Left ventricle myocardium inferior (tissue), 1 donor: ENCODE measurements at regions of chr17 and their contacts with region 1.

Region 1: GRCh38 chr17:29645515-29646051 is 22.9 kb upstream of the CORO6 start:
- DNase-seq: peak; percentile 80
- H3K4me3 ChIP-seq: no peak overlapping the region
- H3K27ac ChIP-seq: peak overlapping the region; percentile 93
- H3K4me1 ChIP-seq: peaks cover 73% of the 10 kb centered on the region
- H3K27me3 ChIP-seq: no peaks in the 10 kb centered on the region
- CTCF ChIP-seq: no peak

Region 2: GRCh38 chr17:29753845-29754439 is 108.4 kb after region 1 on chr17:
- intact Hi-C with region 1: loop called (anchors 10 kb)
- DNase-seq: no peak
- H3K4me3 ChIP-seq: no peak overlapping the region
- H3K27ac ChIP-seq: no peak overlapping the region
- H3K4me1 ChIP-seq: peaks cover 30% of the 10 kb centered on the region
- H3K27me3 ChIP-seq: no peaks in the 10 kb centered on the region
- CTCF ChIP-seq: no peak

Region 3: GRCh38 chr17:29929533-29930408 is 284.2 kb after region 1 on chr17 and contains the start of gene SSH2:
- intact Hi-C with region 1: no loop called
- DNase-seq: peak; percentile 89
- H3K4me3 ChIP-seq: peak within 1 kb of the TSS; percentile 84
- H3K27ac ChIP-seq: peak within 1 kb of the TSS; percentile 92
- H3K4me1 ChIP-seq: peaks cover 60% of the 10 kb centered on the region
- H3K27me3 ChIP-seq: no peaks in the 10 kb centered on the region
- CTCF ChIP-seq: no peak
- total RNA-seq, gene SSH2: 28.6 TPM